ENCODE measurements at regions of chr18 and their contacts with region 1.

Region 1: DNA sequence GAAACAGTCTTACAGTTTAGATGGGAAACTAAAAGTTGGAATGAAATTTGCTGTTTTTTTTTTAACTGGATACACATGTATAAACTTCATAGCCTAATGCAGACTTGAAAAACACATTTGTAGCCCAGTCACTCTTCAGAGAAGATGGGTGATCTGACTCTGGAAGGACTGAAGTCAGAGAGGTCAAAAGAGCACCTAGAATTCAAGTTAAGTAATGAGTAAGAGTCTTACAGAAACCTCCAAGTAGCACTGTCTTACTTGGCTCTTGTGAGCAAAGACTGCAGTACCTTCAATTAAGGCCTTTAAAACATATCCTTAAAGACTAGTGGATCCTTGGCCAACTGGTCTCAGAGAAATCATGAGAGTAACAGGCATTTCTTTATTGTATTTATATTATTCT is 41.9 kb downstream of the TRAPPC8 start:
- DNase-seq: no peak
- ATAC-seq: no peak
- H3K4me3 ChIP-seq: no peak overlapping the region
- H3K27ac ChIP-seq: no peak overlapping the region
- H3K4me1 ChIP-seq: no peaks in the 10 kb centered on the region
- H3K27me3 ChIP-seq: no peaks in the 10 kb centered on the region

Region 2: GRCh38 chr18:31857526-31858106 is 43.4 kb before region 1 on chr18:
- intact Hi-C with region 1: loop called in 1 of 4 experiments (anchors 10 kb)
- DNase-seq: no peak
- ATAC-seq: peak in 1 of 2 donors; percentile 76
- H3K4me3 ChIP-seq: no peak overlapping the region
- H3K27ac ChIP-seq: no peak overlapping the region
- H3K4me1 ChIP-seq: no peaks in the 10 kb centered on the region
- H3K27me3 ChIP-seq: no peaks in the 10 kb centered on the region

Region 3: DNA sequence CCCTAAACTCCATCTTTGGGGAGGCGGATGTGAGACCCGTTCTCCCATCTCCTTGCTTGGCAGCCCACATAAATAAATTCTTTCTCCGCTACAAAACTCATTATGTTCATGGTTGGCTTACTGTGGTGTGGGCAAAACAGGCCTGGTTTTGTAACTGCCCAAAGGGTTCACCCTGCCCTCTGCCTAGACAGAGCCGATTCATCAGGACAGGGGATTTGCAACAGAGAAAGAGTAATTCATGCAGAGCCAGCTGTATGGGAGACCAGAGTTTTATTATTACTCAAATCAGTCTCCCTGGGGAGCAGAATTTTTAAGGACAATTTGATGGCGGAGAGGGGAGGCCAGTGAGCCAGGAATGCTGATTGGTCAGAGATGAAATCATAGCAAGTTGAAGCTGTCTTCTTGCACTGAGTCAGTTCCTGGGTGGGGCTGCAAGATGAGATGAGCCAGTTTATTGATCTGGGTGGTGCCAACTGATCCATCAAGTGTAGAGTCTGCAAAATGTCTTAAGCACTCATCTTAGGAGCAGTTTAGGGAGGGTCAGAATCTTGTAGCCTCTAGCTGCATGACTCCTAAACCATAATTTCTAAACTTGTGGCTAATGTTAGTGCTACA is 109.2 kb after region 1 on chr18:
- intact Hi-C with region 1: no loop called
- DNase-seq: no peak
- ATAC-seq: no peak
- H3K4me3 ChIP-seq: no peak overlapping the region
- H3K27ac ChIP-seq: no peak overlapping the region
- H3K4me1 ChIP-seq: no peaks in the 10 kb centered on the region
- H3K27me3 ChIP-seq: no peaks in the 10 kb centered on the region